Ascending aorta (tissue), 2 donors: ENCODE measurements at regions of chr1 and their contacts with region 1.

Region 1: GRCh38 chr1:24830680-24831272 is 85.5 kb downstream of the CLIC4 start:
- DNase-seq: no peak
- H3K4me3 ChIP-seq: no peak overlapping the region
- H3K27ac ChIP-seq: peak overlapping the region in 1 of 2 donors; percentile 13
- H3K4me1 ChIP-seq: peaks cover 4 to 51% of the 10 kb centered on the region in 2 donors
- H3K27me3 ChIP-seq: no peaks in the 10 kb centered on the region
- CTCF ChIP-seq: peak; percentile 60 to 80 (median 73)

Region 2: GRCh38 chr1:24391882-24392603 is 438.7 kb before region 1 on chr1:
- intact Hi-C with region 1: no loop called
- DNase-seq: peak in 1 of 2 donors; percentile 71
- H3K4me3 ChIP-seq: no peak overlapping the region
- H3K27ac ChIP-seq: peak overlapping the region; percentile 51 to 75
- H3K4me1 ChIP-seq: peaks cover 0 to 2% of the 10 kb centered on the region in 2 donors
- H3K27me3 ChIP-seq: no peaks in the 10 kb centered on the region
- CTCF ChIP-seq: peak; percentile 44 to 57 (median 48)

Region 3: GRCh38 chr1:24688621-24689195 is 142.1 kb before region 1 on chr1:
- intact Hi-C with region 1: loop called (anchors 2 kb)
- DNase-seq: peak in 1 of 2 donors; percentile 87
- H3K4me3 ChIP-seq: no peak overlapping the region
- H3K27ac ChIP-seq: no peak overlapping the region
- H3K4me1 ChIP-seq: no peaks in the 10 kb centered on the region
- H3K27me3 ChIP-seq: no peaks in the 10 kb centered on the region
- CTCF ChIP-seq: peak; percentile 78 to 90 (median 82)